Dendritic cell treated with granulocyte-macrophage colony-stimulating factor and Interleukin-4, amounts not matched to agents 40 ng/mL and 50 ng/mL, for 4 days (primary cell): ENCODE measurements at regions of chr6 and their contacts with region 1.

Region 1: DNA sequence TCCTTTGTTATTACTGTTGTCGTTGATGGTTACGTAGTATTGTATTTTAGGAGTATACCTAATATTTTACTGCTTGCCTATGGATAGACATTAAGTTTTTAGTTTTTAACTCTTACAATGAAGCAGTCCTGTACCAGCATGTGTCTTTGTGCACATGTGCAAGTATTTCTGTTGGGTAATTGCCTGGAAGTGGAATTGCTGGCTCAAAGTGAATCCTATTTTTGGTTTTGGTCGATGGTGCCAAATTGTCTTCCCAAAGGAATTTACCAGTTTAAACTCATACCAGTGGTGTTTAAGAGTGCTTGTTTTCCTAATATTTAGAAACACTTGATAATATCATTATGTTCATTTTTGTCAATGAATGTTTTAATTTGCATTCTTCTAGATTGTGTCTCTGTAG is 75.5 kb downstream of the ANKS1A start:
- H3K4me3 Mint-ChIP-seq: no peak overlapping the region
- H3K27ac Mint-ChIP-seq: no peak overlapping the region
- H3K4me1 Mint-ChIP-seq: peaks cover 7% of the 10 kb centered on the region
- H3K27me3 Mint-ChIP-seq: no peaks in the 10 kb centered on the region

Region 2: GRCh38 chr6:34887753-34888513 is 76.6 kb before region 1 on chr6 and contains the start of gene TAF11:
- intact Hi-C with region 1: loop called (anchors 5 kb)
- H3K4me3 Mint-ChIP-seq: peak within 1 kb of the TSS; percentile 100
- H3K27ac Mint-ChIP-seq: peak within 1 kb of the TSS; percentile 100
- H3K4me1 Mint-ChIP-seq: peaks cover 59% of the 10 kb centered on the region
- H3K27me3 Mint-ChIP-seq: no peaks in the 10 kb centered on the region

Region 3: GRCh38 chr6:34912715-34913464 is 51.7 kb before region 1 on chr6:
- intact Hi-C with region 1: no loop called
- H3K4me3 Mint-ChIP-seq: no peak overlapping the region
- H3K27ac Mint-ChIP-seq: no peak overlapping the region
- H3K4me1 Mint-ChIP-seq: peaks cover 33% of the 10 kb centered on the region
- H3K27me3 Mint-ChIP-seq: no peaks in the 10 kb centered on the region

Region 4: GRCh38 chr6:35280903-35281302 is 316.3 kb after region 1 on chr6:
- intact Hi-C with region 1: no loop called
- H3K4me3 Mint-ChIP-seq: no peak overlapping the region
- H3K27ac Mint-ChIP-seq: no peak overlapping the region
- H3K4me1 Mint-ChIP-seq: peaks cover 5% of the 10 kb centered on the region
- H3K27me3 Mint-ChIP-seq: no peaks in the 10 kb centered on the region

Region 5: GRCh38 chr6:35391240-35391968 is 426.8 kb after region 1 on chr6:
- intact Hi-C with region 1: no loop called
- H3K4me3 Mint-ChIP-seq: no peak overlapping the region
- H3K27ac Mint-ChIP-seq: no peak overlapping the region
- H3K4me1 Mint-ChIP-seq: peaks cover 66% of the 10 kb centered on the region
- H3K27me3 Mint-ChIP-seq: peaks cover 1% of the 10 kb centered on the region